HCT116 (cell line): ENCODE measurements at regions of chr6 and their contacts with region 1.

Region 1: GRCh38 chr6:39865011-39865888 is 69.0 kb downstream of the MOCS1 start:
- DNase-seq: peak; percentile 50
- ATAC-seq: peak; percentile 92
- H3K4me3 ChIP-seq: no peak overlapping the region
- H3K27ac ChIP-seq: no peak overlapping the region
- H3K4me1 ChIP-seq: no peaks in the 10 kb centered on the region
- H3K27me3 ChIP-seq: peaks cover 25% of the 10 kb centered on the region
- CTCF ChIP-seq: peak; percentile 38 to 84 (median 84); a peak in 5 of 6 replicates
- POLR2A ChIP-seq: no peak
- RAD21 ChIP-seq: peak; percentile 56

Region 2: GRCh38 chr6:39876826-39877225 is 11.6 kb after region 1 on chr6:
- CTCF ChIA-PET with region 1: interaction called, 13 read pairs
- POLR2A ChIA-PET with region 1: no interaction called
- RAD21 ChIA-PET with region 1: no interaction called
- intact Hi-C with region 1: no loop called
- DNase-seq: no peak
- ATAC-seq: no peak
- H3K4me3 ChIP-seq: no peak overlapping the region
- H3K27ac ChIP-seq: no peak overlapping the region
- H3K4me1 ChIP-seq: no peaks in the 10 kb centered on the region
- H3K27me3 ChIP-seq: peaks cover 31% of the 10 kb centered on the region
- CTCF ChIP-seq: no peak
- POLR2A ChIP-seq: no peak
- RAD21 ChIP-seq: no peak